ENCODE measurements at regions of chr1 and their contacts with region 1.

Region 1: DNA sequence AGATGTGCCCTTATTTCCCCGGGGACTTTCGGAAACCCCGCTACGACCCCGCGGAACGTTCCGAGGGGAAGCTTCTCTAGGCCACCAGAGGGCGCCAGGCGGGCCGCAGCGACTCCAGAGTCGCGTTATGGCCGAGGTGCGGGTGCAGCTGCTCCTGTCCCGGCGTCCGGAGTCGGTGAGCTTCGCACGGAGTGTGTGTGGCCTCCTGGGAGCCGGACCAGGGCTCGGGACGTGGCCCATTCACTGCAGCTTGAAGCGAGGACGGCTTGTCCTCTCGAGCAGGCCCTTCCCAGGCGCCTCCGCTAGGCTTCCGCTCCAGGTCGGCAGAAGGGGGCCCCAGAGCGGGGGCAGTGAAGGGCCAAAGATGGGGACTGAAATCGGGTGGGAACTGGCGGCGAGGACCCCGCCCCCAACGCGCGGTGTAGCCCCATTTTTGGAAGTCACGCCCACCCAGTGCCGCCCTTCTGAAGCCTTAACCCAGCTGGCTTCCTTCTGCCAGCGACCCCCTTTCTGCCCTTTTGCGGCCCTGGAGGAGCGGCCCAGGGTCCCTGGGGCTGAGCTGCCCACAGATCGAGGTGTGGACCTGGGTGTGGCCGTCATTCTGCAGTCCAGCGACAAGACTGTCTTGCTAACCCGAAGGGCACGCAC is at the start of gene NUDT17:
- DNase-seq: peak; percentile 84 to 94 (median 90)
- H3K4me3 ChIP-seq: peak within 1 kb of the TSS; percentile 61 to 82 (median 72)
- H3K27ac ChIP-seq: peak within 1 kb of the TSS; percentile 48 to 66
- H3K4me1 ChIP-seq: peaks cover 3 to 11% (median 5%) of the 10 kb centered on the region in 3 donors
- H3K27me3 ChIP-seq: no peaks in the 10 kb centered on the region
- CTCF ChIP-seq: peak; percentile 79
- total RNA-seq, gene NUDT17: 3.8 TPM

Region 2: GRCh38 chr1:145777357-145778145 is 68.1 kb before region 1 on chr1:
- intact Hi-C with region 1: no loop called
- DNase-seq: no peak
- H3K4me3 ChIP-seq: no peak overlapping the region
- H3K27ac ChIP-seq: no peak overlapping the region
- H3K4me1 ChIP-seq: no peaks in the 10 kb centered on the region
- H3K27me3 ChIP-seq: no peaks in the 10 kb centered on the region
- CTCF ChIP-seq: no peak

Region 3: DNA sequence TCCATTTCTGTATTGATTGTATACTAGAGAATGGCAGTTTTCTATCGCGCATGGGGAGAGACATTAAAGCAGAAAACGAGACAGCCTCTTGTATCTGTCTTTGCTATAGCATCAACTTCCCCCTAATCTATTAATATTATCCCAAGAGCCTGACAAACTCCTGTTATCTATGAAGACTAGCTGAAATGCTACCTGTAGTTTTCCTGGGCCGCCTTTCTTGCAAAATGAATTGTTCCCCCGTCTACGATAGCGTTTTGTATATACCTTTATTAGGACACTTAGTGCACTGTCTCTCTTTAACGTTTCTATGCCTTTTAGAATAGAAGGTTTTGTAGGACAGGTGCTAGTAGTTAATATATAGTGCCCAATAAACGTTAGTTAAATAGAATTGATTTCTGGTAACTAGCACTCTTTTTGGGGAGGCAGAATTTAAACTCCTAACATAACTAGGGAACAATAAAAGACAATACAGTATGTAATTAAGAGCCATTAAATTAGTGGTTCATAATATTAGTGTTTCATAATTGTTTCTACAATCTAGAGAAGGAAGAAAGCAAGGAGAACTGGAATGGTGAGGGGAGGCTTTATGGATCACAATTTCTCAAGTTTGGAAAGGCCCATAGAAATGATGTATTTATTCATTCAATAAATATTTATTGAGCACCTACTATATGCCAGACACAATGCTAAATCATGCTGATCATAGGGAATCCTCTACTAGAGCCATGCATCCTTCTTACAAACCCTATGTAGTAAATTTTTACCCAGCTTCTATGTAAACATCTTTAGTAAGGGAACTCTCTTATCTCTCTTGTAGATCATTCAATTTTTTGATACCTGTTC is 119.5 kb after region 1 on chr1:
- intact Hi-C with region 1: loop called (anchors 5 kb)
- DNase-seq: no peak
- H3K4me3 ChIP-seq: peak overlapping the region; percentile 81 to 91 (median 85)
- H3K27ac ChIP-seq: peak overlapping the region; percentile 85 to 88
- H3K4me1 ChIP-seq: peaks cover 2 to 27% (median 4%) of the 10 kb centered on the region in 3 donors
- H3K27me3 ChIP-seq: no peaks in the 10 kb centered on the region
- CTCF ChIP-seq: no peak

Region 4: GRCh38 chr1:146012737-146013403 is 167.2 kb after region 1 on chr1:
- intact Hi-C with region 1: loop called (anchors 10 kb)
- DNase-seq: peak in 4 of 5 donors; percentile 19 to 87 (median 64)
- H3K4me3 ChIP-seq: no peak overlapping the region
- H3K27ac ChIP-seq: no peak overlapping the region
- H3K4me1 ChIP-seq: no peaks in the 10 kb centered on the region
- H3K27me3 ChIP-seq: no peaks in the 10 kb centered on the region
- CTCF ChIP-seq: peak; percentile 84

Measured in kidney (tissue), 22 donors.